ENCODE measurements at regions of chr6 and their contacts with region 1.

Region 1: DNA sequence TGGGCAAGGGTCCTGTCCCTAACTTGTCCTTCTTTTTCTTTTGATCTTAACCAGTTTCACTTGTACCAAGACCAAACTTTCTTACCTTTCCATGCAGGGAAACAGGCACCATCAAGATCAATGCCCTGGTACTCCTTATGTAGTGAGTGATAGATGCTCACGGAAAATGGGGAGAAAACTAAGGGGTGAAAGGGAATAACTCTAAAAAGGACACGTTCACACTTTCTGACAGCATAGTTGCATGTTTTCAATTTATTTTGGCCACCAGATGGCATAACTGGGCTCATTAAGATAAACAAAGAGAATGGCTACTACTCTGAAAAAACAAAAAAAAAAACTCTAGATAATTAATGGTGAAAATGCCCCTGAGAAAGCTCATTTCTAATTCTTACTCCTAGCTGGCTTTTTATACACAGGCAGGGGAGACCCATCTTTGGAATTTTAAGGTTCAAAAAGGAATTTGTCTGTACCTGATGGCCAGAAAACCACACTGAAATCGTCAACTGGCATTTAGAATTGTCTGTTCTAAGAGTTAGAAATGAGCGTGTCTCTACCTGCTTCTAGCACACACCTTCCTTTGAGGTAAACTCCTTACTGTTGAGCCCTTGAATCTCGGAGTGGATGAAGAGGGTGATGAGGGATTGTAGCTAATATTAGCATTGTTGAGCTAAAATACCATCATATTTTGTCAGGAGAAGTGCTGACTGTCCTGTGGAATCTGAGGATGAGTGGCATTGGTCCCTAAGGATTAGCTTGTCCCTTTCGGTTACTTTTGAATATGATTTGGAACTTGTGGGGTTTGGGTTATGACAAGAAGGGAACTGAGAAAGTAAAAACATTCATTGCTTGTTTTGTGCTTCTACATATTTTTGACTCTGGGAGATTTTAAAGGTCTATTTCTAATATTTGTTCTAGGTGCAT is 62.2 kb upstream of the DDR1 start:
- DNase-seq: no peak

Region 2: DNA sequence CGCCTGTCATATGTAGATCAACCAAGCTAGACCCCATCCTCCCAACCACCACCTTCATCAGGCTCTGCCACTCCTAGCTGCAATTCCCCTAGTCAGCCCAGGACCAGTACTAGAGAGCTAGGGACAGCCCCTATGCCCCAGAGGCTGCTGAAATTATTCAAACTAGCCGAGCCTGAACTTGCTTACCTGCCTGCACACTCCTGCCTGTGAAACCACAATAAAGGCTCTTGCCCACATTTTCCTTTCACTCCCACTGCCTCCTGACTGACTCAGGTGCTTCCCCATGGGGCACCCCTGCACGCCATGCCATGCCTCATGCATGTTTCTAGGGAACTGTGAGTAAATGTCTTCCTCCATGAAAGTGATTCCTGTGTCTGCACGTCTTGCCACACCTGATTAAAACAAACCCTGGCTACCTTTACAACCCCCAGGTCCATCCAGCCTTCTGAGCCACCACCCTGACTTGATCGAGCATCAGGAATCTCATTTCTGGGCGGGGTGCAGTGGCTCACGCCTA is 11.3 kb before region 1 on chr6:
- CTCF ChIA-PET with region 1: interaction called, 13 read pairs
- POLR2A ChIA-PET with region 1: no interaction called
- DNase-seq: no peak

Region 3: DNA sequence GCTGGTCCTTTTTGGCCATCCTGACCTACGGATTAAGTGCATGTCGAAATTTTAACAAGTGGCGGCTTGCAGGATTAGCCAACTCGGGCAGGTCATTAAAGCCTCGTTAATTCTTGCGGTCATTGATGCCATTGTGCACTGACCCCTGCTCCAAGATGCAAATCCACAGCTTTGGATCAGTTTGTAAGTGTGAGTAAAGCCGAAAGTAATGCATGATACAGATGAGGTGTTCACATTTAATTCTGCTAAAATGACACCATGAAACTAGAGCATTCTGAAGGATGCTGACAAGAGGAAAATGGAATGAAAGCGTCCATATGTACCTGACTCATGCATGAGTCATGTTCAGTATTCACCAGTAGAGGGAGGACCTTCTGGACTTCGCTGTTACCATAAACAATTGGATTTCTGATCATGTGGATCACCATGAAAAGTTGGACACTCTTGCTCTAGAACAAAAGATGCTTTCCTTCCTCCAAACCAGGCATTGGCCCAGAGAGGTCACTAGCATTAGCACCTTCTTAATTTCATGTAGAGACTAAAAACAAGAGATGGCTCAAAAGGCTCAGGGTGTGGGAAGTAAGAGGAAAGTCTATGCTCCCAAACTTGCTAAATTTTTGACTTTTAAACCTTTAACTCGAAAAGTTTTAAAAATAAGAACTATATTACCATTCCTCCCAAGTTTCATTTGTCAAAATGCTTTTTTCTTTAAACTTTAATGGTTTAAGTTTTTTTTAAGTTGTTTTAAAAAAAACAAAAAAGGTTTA is 236.2 kb after region 1 on chr6:
- CTCF ChIA-PET with region 1: no interaction called
- POLR2A ChIA-PET with region 1: no interaction called
- DNase-seq: peak; percentile 64

Measured in HEK293T (cell line).